HepG2 (cell line): ENCODE measurements at regions of chr4 and their contacts with region 1.

Region 1: DNA sequence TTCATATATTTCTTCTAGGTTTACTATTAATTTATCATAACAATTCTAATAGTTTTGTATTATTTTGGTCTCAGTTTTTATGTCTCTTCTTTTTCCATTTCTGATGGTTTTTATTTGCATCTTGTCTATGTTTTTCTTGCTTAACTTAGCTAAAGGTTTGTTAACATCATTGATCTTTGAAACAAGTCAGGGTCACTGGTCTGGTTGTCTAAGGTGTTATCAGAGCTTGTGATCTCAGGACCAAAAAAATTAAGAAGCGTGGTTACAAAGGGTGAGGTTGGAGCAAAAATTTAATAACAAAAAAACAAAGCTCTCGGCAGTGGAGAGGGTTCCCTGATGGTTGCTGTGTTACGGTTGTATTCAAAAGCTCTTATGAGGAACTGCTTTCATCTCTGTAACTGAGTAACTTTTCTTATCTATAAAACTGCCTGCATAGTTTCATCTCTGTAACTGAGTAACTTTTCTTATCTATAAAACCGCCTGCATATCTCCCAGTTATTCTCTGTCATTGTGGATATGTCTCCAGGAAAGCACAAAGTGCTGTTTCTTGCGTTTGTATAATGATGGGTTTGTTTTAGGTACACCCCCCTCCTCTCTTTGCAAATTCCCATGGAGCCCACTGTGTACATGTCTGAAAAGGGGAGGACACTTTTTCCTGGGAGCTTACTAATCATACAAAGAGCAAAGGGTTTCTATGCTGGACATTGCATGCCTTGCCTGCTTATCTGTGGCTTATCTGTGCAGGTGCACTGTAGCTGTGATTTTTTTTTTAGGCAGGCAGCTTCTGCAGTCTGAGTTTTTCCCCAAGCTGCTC is 62.4 kb upstream of the UGT2B15 start:
- DNase-seq: peak; percentile 100
- ATAC-seq: peak; percentile 97
- H3K4me3 ChIP-seq: no peak overlapping the region
- H3K27ac ChIP-seq: peak overlapping the region; percentile 93
- H3K4me1 ChIP-seq: peaks cover 72% of the 10 kb centered on the region
- H3K27me3 ChIP-seq: no peaks in the 10 kb centered on the region
- CTCF ChIP-seq: no peak
- EP300 ChIP-seq: peak; percentile 69 to 97; a peak in 2 of 4 replicates
- POLR2A ChIP-seq: no peak
- RAD21 ChIP-seq: peak; percentile 69

Region 2: DNA sequence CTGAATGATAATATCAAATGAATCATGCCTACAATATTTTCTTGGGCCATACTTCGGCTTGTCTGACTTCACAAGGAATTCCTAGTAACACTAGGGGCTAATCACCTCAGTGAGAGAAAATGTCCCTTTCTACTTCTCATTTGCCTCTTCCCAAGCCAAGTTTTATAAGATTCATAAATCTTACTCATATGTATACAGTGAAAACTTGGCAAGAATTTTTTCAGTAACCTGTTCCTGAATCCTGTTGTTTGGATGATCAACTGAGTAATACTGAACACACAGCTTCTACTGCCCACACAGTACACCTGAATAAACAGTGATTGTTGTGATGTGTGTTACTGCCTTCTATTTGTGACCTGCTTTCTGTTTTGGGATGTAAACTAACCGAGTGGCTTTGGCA is 269.1 kb before region 1 on chr4:
- CTCF ChIA-PET with region 1: no interaction called
- POLR2A ChIA-PET with region 1: no interaction called
- in situ Hi-C with region 1: no loop called
- intact Hi-C with region 1: no loop called
- DNase-seq: no peak
- ATAC-seq: no peak
- H3K4me3 ChIP-seq: no peak overlapping the region
- H3K27ac ChIP-seq: no peak overlapping the region
- H3K4me1 ChIP-seq: no peaks in the 10 kb centered on the region
- H3K27me3 ChIP-seq: peaks cover 0 to 10% of the 10 kb centered on the region in 2 experiments; a peak in 1 of 5 replicates
- CTCF ChIP-seq: no peak
- EP300 ChIP-seq: no peak
- POLR2A ChIP-seq: no peak
- RAD21 ChIP-seq: no peak

Region 3: GRCh38 chr4:68655764-68656444 is 77.0 kb before region 1 on chr4:
- CTCF ChIA-PET with region 1: no interaction called
- POLR2A ChIA-PET with region 1: interaction called, 35 read pairs
- in situ Hi-C with region 1: no loop called
- intact Hi-C with region 1: loop called (anchors 2 kb)
- DNase-seq: peak; percentile 91
- ATAC-seq: peak; percentile 84
- H3K4me3 ChIP-seq: peak overlapping the region in 2 of 3 experiments; percentile 15 to 26; a peak in 2 of 6 replicates
- H3K27ac ChIP-seq: peak overlapping the region; percentile 95
- H3K4me1 ChIP-seq: peaks cover 53% of the 10 kb centered on the region
- H3K27me3 ChIP-seq: no peaks in the 10 kb centered on the region
- CTCF ChIP-seq: no peak
- EP300 ChIP-seq: peak in 1 of 2 experiments; percentile 72; a peak in 2 of 4 replicates
- POLR2A ChIP-seq: no peak
- RAD21 ChIP-seq: no peak

Region 4: DNA sequence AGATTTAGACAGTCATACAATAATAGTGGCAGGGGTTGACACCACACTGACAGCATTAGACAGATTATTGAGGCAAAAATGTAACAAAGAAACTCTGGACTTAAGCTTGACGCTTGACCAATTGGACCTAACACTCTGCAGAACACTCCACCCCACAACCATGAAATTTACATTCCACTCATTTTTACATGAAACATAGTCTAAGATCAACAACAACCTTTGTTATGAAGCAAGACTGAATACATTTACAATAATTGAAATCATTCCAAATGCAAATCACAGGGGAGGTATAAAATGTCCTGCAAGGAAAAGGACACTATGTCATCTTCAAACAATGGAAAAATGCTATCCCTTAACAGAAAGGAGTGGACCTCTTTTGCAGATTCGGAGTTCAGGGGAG is 78.1 kb after region 1 on chr4:
- CTCF ChIA-PET with region 1: no interaction called
- POLR2A ChIA-PET with region 1: interaction called, 43 read pairs
- in situ Hi-C with region 1: loop called (anchors 10 kb)
- intact Hi-C with region 1: loop called (anchors 2 kb)
- DNase-seq: peak; percentile 3
- ATAC-seq: no peak
- H3K4me3 ChIP-seq: no peak overlapping the region
- H3K27ac ChIP-seq: no peak overlapping the region
- H3K4me1 ChIP-seq: peaks cover 36% of the 10 kb centered on the region
- H3K27me3 ChIP-seq: no peaks in the 10 kb centered on the region
- CTCF ChIP-seq: no peak
- EP300 ChIP-seq: no peak
- POLR2A ChIP-seq: no peak
- RAD21 ChIP-seq: no peak

Region 5: GRCh38 chr4:68864438-68865187 is 131.8 kb after region 1 on chr4:
- CTCF ChIA-PET with region 1: no interaction called
- POLR2A ChIA-PET with region 1: interaction called, 23 read pairs
- in situ Hi-C with region 1: no loop called
- intact Hi-C with region 1: loop called (anchors 1 kb)
- DNase-seq: peak; percentile 92
- ATAC-seq: peak; percentile 96
- H3K4me3 ChIP-seq: peak overlapping the region in 2 of 3 experiments; percentile 35 to 51; a peak in 3 of 6 replicates
- H3K27ac ChIP-seq: peak overlapping the region; percentile 76
- H3K4me1 ChIP-seq: peaks cover 61% of the 10 kb centered on the region
- H3K27me3 ChIP-seq: no peaks in the 10 kb centered on the region
- CTCF ChIP-seq: 0 out of 2 replicates have a peak, but pooled peaks have one; percentile 10
- EP300 ChIP-seq: peak in 1 of 2 experiments; percentile 86; a peak in 2 of 4 replicates
- POLR2A ChIP-seq: no peak; a peak in 1 of 4 replicates
- RAD21 ChIP-seq: no peak

Region 6: DNA sequence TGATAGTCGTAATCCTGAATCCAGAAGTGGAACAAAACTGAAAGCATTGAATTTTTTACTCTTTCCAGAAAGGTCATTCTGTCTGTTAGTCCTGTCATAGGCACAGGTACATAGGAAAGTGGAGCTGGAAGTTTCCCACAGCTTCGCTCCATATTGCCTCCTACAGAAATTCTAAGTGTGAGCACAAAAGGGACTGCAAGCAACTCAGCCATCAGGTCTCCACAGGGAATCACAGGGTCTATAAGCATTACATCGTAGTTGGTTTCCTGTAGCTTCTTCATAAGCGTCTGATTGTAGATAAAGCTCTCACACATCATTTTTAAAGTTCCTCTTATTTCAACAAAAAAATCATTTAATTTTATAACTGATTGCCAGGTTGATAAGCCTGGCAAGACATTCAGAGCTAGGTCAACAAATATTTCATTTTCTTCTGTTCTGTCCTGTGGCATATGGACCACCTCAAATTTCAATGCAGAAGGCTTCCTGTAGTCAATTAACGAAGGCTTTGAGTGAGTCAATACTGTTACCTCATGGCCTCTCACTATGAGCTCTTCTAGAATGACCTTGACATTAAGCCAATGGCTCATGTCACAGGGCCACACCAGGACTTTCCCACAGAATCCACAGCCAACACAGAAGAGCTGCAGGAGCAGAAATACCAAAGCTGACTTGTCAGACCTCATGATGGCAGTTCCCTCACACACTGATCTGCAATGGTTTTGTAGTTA is 218.4 kb after region 1 on chr4 and contains the start of gene UGT2A3:
- CTCF ChIA-PET with region 1: no interaction called
- POLR2A ChIA-PET with region 1: interaction called, 32 read pairs
- in situ Hi-C with region 1: no loop called
- intact Hi-C with region 1: loop called (anchors 2 kb)
- DNase-seq: peak; percentile 99
- ATAC-seq: peak; percentile 91
- H3K4me3 ChIP-seq: peak within 1 kb of the TSS; percentile 59 to 93 (median 70); a peak in 5 of 6 replicates
- H3K27ac ChIP-seq: peak within 1 kb of the TSS; percentile 92
- H3K4me1 ChIP-seq: peaks cover 77% of the 10 kb centered on the region
- H3K27me3 ChIP-seq: no peaks in the 10 kb centered on the region
- CTCF ChIP-seq: peak; percentile 30
- EP300 ChIP-seq: peak; percentile 44 to 85; a peak in 2 of 4 replicates
- POLR2A ChIP-seq: peak; percentile 69 to 88
- RAD21 ChIP-seq: no peak
- total RNA-seq, gene UGT2A3: 74.1 and 97.2 TPM in 2 replicates

Region 7: GRCh38 chr4:69095301-69095731 is 362.5 kb after region 1 on chr4:
- CTCF ChIA-PET with region 1: no interaction called
- POLR2A ChIA-PET with region 1: interaction called, 6 read pairs
- in situ Hi-C with region 1: no loop called
- intact Hi-C with region 1: loop called (anchors 2 kb)
- DNase-seq: peak; percentile 89
- ATAC-seq: peak; percentile 72
- H3K4me3 ChIP-seq: no peak overlapping the region; a peak in 1 of 6 replicates
- H3K27ac ChIP-seq: peak overlapping the region; percentile 72
- H3K4me1 ChIP-seq: peaks cover 61% of the 10 kb centered on the region
- H3K27me3 ChIP-seq: no peaks in the 10 kb centered on the region
- CTCF ChIP-seq: no peak
- EP300 ChIP-seq: peak in 1 of 2 experiments; percentile 97; a peak in 2 of 4 replicates
- POLR2A ChIP-seq: no peak
- RAD21 ChIP-seq: no peak

Region 8: GRCh38 chr4:69470561-69470960 is 737.7 kb after region 1 on chr4:
- CTCF ChIA-PET with region 1: no interaction called
- POLR2A ChIA-PET with region 1: no interaction called
- in situ Hi-C with region 1: no loop called
- intact Hi-C with region 1: no loop called
- DNase-seq: no peak
- ATAC-seq: peak; percentile 76
- H3K4me3 ChIP-seq: no peak overlapping the region
- H3K27ac ChIP-seq: no peak overlapping the region
- H3K4me1 ChIP-seq: peaks cover 12% of the 10 kb centered on the region; the same call in 1 of the 2 replicates
- H3K27me3 ChIP-seq: no peaks in the 10 kb centered on the region
- CTCF ChIP-seq: peak; percentile 48
- EP300 ChIP-seq: no peak
- POLR2A ChIP-seq: no peak
- RAD21 ChIP-seq: no peak